ENCODE measurements at regions of chr9 and their contacts with region 1.

Region 1: DNA sequence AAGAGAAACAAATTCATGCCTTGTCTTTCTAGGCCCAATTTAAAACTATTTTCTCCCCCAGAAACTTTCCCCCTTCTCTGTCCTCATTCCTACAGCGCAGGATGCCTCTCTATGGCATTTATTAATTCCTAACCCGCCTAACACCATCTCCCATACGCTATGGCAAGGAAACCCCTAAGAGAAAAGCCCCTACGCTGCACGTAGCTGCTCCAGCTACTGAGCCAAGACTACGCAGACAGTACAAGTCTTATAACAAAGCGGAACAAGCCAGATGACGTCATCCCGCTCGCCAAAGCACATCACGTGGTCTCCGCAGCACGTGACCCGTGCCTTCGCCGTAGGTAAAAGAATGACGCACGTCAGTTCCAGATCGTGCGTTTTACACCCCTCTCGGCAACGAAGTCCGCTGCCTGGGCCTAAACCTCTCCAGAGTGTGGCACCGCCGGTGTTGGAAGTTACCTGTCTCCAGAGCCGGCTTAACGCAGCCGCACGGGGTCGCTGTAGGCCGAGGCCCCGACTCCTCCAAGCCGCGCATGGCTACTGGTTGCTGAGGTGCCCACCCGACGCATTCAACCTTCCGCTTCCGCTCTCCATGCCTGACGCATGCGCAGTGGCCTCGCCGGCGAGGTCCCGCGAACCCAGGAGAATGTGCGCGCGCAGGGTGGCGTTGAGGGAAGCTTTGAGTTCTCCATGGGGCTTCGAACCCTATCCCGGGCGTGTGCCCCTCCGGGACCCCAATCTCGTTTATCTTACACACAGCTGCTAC is at the start of gene TRMO:
- DNase-seq: peak; percentile 96
- H3K4me3 Mint-ChIP-seq: peak within 1 kb of the TSS; percentile 96
- H3K27ac Mint-ChIP-seq: peak within 1 kb of the TSS; percentile 99
- H3K4me1 Mint-ChIP-seq: peaks cover 59% of the 10 kb centered on the region
- H3K27me3 Mint-ChIP-seq: no peaks in the 10 kb centered on the region
- total RNA-seq, gene TRMO: 13.1 and 14.5 TPM in 2 replicates

Region 2: DNA sequence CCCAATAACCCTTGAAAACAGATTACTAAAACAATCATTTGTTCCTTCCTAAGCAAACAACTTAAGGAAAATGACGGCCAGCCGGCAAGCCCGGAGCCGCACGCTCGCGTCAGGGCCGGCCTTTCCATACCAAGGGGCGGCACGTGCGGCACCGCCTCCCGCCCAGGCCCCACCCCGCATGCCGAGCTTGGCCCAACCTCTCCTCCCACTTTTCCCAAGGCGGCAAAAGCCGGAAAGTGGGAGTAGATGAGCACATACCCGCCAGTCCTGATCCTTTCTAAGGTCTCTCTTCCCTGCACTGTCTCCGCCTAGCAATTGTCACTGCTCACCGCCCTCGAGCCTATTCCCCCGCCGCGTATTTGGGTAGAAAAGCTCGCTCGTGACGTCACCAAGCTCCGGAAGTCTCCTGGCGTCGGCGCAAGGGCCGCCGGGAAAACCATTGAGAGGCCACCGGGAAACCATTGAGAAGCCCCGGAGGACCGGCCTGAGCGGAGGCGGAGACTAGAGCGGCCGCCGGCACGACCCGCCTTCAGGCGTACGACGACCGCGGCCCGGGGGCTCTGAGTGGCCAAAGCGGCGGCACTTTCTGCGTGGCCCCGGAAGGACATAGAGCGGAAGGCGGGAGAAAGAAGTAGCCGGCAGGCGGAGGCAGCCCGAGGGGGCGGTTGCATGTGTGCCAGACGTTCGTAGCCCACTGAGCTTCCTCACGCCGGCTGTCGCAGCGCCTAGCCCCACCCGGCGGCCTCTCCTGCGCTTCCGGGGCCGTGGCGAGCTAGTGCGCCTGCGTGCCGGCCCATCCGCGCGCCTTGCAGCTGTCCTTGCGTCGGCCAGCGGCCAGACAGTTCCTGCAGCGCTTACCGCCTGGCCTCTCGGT is 288.9 kb before region 1 on chr9 and contains the starts of genes NCBP1 and TSTD2:
- intact Hi-C with region 1: loop called (anchors 1 kb)
- DNase-seq: peak; percentile 95
- H3K4me3 Mint-ChIP-seq: peak within 1 kb of the TSS; percentile 94
- H3K27ac Mint-ChIP-seq: peak within 1 kb of the TSS; percentile 99
- H3K4me1 Mint-ChIP-seq: peaks cover 48% of the 10 kb centered on the region
- H3K27me3 Mint-ChIP-seq: no peaks in the 10 kb centered on the region
- total RNA-seq, gene NCBP1: 43.2 and 50.5 TPM in 2 replicates
- total RNA-seq, gene TSTD2: 16.4 and 19.2 TPM in 2 replicates

Region 3: GRCh38 chr9:97803167-97804058 is 118.7 kb before region 1 on chr9:
- intact Hi-C with region 1: loop called (anchors 2 kb)
- DNase-seq: peak; percentile 66
- H3K4me3 Mint-ChIP-seq: peak overlapping the region; percentile 79
- H3K27ac Mint-ChIP-seq: peak overlapping the region; percentile 67
- H3K4me1 Mint-ChIP-seq: peaks cover 17% of the 10 kb centered on the region
- H3K27me3 Mint-ChIP-seq: peaks cover 25% of the 10 kb centered on the region

Region 4: DNA sequence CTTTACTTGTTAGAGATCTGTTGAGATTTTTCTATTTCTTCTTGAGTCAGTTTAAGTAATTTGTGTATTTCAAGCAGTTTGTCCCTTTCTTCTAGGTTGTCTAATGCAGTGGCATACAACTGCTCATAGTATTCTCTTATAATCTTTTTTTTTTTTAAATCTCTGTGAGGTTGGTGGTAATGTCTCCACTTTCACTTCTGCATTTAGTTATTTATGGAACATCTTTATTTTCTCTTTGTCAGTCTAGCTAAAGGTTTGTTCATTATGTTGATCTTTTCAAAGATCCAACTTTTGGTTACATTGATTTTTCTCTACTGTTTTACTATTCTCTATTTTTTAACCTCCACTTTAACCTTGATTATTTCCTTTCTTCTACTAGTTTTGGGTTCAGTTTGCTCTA is 55.3 kb before region 1 on chr9:
- intact Hi-C with region 1: no loop called
- DNase-seq: no peak
- H3K4me3 Mint-ChIP-seq: no peak overlapping the region
- H3K27ac Mint-ChIP-seq: no peak overlapping the region
- H3K4me1 Mint-ChIP-seq: no peaks in the 10 kb centered on the region
- H3K27me3 Mint-ChIP-seq: peaks cover 41% of the 10 kb centered on the region

Region 5: DNA sequence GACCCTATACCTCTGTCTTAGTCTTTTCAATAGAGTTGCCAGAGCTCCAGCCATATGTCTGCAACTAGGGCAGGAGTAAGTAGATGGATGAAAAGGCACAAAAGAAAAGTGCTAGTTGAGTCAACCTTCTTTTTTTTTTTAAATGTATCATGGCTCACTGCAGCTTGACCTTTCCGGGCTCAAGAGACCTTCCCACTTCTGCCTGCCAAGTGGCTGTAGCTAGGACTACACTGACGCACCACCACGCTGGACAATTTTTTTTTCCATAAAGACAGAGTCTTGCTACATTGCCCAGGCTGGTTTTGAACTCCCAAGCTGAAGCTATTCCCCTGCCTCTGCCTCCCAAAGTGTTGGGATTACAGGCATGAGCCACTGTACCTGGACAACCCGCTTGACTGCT is 41.8 kb before region 1 on chr9:
- intact Hi-C with region 1: no loop called
- DNase-seq: no peak
- H3K4me3 Mint-ChIP-seq: no peak overlapping the region
- H3K27ac Mint-ChIP-seq: no peak overlapping the region
- H3K4me1 Mint-ChIP-seq: no peaks in the 10 kb centered on the region
- H3K27me3 Mint-ChIP-seq: peaks cover 29% of the 10 kb centered on the region

Region 6: GRCh38 chr9:97954550-97954989 is 32.4 kb after region 1 on chr9:
- intact Hi-C with region 1: loop called (anchors 1 kb)
- DNase-seq: peak; percentile 35
- H3K4me3 Mint-ChIP-seq: no peak overlapping the region
- H3K27ac Mint-ChIP-seq: no peak overlapping the region
- H3K4me1 Mint-ChIP-seq: no peaks in the 10 kb centered on the region
- H3K27me3 Mint-ChIP-seq: peaks cover 8% of the 10 kb centered on the region

Region 7: DNA sequence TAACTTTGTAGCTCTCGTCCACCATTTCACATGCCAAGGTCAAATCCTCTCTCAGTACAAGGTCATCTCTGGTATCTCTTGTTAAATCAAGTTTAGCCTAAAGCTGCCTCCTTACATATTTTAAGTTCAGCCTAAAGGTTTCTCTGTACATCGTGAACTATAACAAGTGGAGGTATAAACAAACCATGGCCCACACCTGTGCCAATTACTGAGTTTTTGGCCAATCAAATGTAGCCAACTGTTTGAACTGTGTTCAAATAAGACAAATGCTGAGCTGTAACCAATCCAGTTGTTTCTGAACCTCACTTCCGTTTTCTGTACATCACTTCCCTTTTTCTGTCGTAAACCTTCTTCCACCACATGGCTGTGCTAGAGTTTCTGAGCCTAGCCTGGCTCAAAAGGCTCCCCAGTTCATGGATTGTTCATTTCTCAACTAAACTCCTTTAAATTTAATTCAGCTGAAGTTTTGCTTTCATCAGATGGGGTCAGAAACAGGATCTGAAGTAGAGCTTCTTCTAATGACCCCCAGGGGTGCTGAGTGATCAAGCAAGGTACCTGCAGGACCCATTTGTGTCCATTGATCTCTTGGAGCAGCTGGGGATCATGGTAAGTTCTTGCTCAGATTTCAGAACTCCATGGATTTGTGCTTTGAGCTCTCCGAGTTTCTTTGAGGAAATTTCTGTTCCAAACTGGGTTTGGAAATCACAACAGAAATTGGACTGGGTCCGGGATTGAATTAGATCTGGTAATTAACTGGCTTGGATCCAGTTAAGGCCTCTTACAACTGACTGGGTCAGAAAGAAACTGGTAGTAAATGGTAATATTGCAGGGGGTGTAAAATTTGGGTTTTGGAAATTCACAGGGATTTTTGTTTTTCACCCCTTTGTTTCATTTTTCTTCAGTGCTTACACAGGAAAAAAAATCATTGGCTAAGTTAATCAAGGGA is 123.4 kb after region 1 on chr9:
- intact Hi-C with region 1: loop called (anchors 1 kb)
- DNase-seq: peak; percentile 38
- H3K4me3 Mint-ChIP-seq: peak overlapping the region; percentile 87
- H3K27ac Mint-ChIP-seq: peak overlapping the region; percentile 86
- H3K4me1 Mint-ChIP-seq: peaks cover 41% of the 10 kb centered on the region
- H3K27me3 Mint-ChIP-seq: peaks cover 6% of the 10 kb centered on the region

Region 8: DNA sequence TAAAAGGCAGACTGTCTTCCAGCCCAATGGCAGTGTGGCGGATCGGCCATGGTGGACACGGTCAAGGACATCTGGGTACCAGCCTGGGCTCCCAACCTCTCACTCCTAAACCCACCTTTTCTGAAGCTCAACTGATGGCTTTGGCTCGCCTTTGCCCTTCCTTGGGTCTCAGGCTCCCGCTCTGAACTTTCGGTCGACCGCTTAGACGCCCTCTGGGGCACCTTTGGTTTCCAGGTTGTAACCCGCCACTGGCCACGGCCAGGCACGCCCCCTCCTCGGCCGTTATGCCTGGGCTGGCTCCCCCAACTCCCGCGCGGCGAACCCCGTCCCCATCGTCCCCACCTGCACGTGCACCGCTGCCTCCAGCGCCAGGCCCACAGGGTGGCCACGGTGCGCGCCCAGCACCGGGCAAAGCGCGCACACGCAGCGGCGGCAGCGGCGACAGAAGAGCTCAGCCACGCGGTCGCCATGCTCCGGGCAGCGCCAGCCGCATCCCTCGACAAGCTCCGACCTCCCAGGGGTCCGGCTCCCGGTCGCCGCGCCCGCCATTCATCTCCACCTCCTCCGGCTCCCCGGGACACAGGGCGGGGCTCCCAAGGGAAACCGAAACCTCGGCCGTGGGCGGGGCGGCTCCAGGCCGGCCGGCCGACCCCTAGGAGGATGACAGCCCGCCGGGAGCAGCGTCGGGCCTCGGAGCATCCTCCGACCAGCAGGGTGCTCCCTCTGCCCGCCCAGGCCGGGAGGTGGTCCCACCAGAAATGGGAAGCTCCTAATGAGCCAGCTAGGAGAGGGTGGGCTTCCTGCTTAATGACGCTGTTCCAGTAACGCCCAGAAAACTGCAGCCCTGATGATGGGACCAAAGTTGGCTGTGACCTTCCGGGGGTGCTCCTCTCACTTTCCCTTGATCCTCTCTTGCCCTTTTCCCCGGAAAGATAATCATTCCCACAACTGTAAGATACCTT is 196.8 kb after region 1 on chr9 and contains the start of gene TRIM14:
- intact Hi-C with region 1: loop called (anchors 1 kb)
- DNase-seq: peak; percentile 71
- H3K4me3 Mint-ChIP-seq: peak within 1 kb of the TSS; percentile 95
- H3K27ac Mint-ChIP-seq: peak within 1 kb of the TSS; percentile 98
- H3K4me1 Mint-ChIP-seq: peaks cover 42% of the 10 kb centered on the region
- H3K27me3 Mint-ChIP-seq: no peaks in the 10 kb centered on the region
- total RNA-seq, gene TRIM14: 41.7 and 42.0 TPM in 2 replicates